ENCODE measurements at regions of chr15 and their contacts with region 1.

Region 1: GRCh38 chr15:28131400-28131799 is 32.3 kb upstream of the OCA2 start:
- DNase-seq: no peak
- H3K4me3 ChIP-seq: no peak overlapping the region
- H3K27ac ChIP-seq: no peak overlapping the region
- H3K4me1 ChIP-seq: no peaks in the 10 kb centered on the region
- H3K27me3 ChIP-seq: no peaks in the 10 kb centered on the region
- CTCF ChIP-seq: no peak

Region 2: DNA sequence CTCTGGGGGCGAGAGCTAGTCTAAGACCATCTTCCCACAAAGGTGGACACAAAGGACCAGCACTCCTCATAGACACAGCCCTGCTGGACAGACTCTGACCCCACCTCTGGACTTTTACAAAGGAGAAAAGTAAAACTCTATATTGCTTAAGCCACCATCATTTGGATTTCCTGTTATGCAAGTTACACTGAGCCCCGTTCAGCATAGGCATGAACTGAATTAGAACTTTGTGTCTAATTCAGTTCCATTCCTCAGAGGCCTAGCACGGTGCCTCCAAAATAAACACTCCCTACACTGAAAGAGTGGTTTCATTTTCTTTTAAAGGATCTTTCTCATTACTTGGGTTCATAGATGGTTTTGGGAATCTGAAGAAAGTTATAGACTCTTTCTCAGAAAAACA is 46.9 kb after region 1 on chr15:
- intact Hi-C with region 1: loop called (anchors 2 kb)
- DNase-seq: no peak
- H3K4me3 ChIP-seq: no peak overlapping the region
- H3K27ac ChIP-seq: no peak overlapping the region
- H3K4me1 ChIP-seq: peaks cover 4% of the 10 kb centered on the region
- H3K27me3 ChIP-seq: no peaks in the 10 kb centered on the region
- CTCF ChIP-seq: no peak

Measured in colonic mucosa (tissue), 4 donors.